Vagina (tissue), 2 donors: ENCODE measurements at regions of chr10 and their contacts with region 1.

Region 1: GRCh38 chr10:29661277-29661604 is 26.5 kb upstream of the SVIL start:
- DNase-seq: no peak
- H3K4me3 ChIP-seq: no peak overlapping the region
- H3K27ac ChIP-seq: peak overlapping the region; percentile 28
- H3K4me1 ChIP-seq: peaks cover 48% of the 10 kb centered on the region
- H3K27me3 ChIP-seq: no peaks in the 10 kb centered on the region
- CTCF ChIP-seq: no peak
- POLR2A ChIP-seq: no peak

Region 2: GRCh38 chr10:30254926-30255325 is 593.7 kb after region 1 on chr10:
- intact Hi-C with region 1: loop called (anchors 5 kb)
- DNase-seq: no peak
- H3K4me3 ChIP-seq: no peak overlapping the region
- H3K27ac ChIP-seq: no peak overlapping the region
- H3K4me1 ChIP-seq: no peaks in the 10 kb centered on the region
- H3K27me3 ChIP-seq: no peaks in the 10 kb centered on the region
- CTCF ChIP-seq: no peak
- POLR2A ChIP-seq: no peak